Activated T-helper 2 cell treated with anti-CD3 and anti-CD28 coated beads, Interferon-gamma antibody, Interleukin-2, Interleukin-4, amounts not matched to agents 10 μg/mL and 5 μg/mL and 100 μg/mL, durations not matched to agents 14 hours and 24 hours and 36 hours (primary cell): ENCODE measurements at regions of chr3 and their contacts with region 1.

Region 1: DNA sequence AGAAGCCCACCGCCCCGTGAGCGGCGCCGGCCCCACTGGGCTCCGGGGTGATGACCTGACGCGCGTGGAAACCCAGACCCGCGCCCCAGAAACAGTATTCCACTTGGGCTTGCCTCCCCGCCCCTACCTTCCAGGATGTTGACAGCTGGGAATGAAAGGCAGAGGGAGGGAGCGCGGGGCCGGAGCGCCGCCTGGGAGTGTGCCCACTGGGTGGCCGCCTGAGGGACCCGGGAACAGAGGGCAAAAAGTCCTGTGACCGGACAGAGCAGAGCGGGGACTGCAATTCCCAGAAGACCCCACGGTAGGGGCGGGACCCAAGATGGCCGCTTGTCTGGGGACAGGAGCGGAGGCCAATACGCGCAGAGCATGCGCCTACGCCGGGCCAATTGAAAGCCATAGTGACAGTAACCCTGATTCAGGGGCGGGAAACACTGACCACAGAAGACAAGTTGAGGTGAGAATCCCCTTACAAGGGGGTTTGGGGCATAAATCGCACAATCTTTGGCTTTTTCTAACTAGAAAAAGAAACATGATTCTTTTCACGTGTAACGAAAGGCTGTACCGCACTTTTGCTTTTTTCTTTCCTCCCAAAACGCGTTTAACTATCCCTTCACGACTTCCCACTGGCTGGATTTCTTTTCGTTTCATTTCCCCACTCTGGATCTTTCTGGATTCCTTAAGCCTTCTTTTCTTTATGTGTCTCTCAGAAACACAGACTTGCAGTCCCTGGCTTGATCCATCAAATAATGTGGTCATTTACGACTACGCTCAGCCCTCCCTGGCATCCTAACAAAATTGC is at the start of gene FHIT:
- DNase-seq: peak; percentile 89
- H3K4me3 Mint-ChIP-seq: peak within 1 kb of the TSS; percentile 91
- H3K27ac Mint-ChIP-seq: peak within 1 kb of the TSS; percentile 96
- H3K4me1 Mint-ChIP-seq: peaks cover 32% of the 10 kb centered on the region
- H3K27me3 Mint-ChIP-seq: peaks cover 11% of the 10 kb centered on the region
- total RNA-seq, gene FHIT: 20.5 and 29.9 TPM in 2 replicates

Region 2: DNA sequence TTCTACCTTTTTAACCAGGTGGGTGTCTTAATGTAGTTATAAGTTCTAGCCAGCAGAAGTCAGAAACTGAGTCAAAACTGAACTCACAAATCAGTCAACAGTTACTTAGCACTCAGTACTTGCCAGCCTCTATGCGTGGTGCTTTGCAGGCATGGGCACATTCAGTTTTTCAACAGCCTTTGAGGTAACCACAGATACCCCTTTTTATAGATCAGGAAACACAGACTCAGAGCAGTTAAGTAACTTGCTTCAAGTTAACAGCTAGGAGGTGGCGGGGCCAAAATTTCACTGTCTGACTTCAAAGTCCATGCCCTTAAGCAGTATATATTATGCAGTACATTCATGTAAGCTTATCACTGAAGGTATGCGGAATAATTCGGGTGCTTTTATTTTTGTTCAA is 139.5 kb before region 1 on chr3:
- intact Hi-C with region 1: loop called (anchors 5 kb)
- DNase-seq: peak; percentile 8
- H3K4me3 Mint-ChIP-seq: no peak overlapping the region
- H3K27ac Mint-ChIP-seq: no peak overlapping the region
- H3K4me1 Mint-ChIP-seq: peaks cover 19% of the 10 kb centered on the region
- H3K27me3 Mint-ChIP-seq: no peaks in the 10 kb centered on the region

Region 3: GRCh38 chr3:61132062-61132461 is 119.3 kb before region 1 on chr3:
- intact Hi-C with region 1: no loop called
- DNase-seq: no peak
- H3K4me3 Mint-ChIP-seq: no peak overlapping the region
- H3K27ac Mint-ChIP-seq: no peak overlapping the region
- H3K4me1 Mint-ChIP-seq: no peaks in the 10 kb centered on the region
- H3K27me3 Mint-ChIP-seq: no peaks in the 10 kb centered on the region

Region 4: DNA sequence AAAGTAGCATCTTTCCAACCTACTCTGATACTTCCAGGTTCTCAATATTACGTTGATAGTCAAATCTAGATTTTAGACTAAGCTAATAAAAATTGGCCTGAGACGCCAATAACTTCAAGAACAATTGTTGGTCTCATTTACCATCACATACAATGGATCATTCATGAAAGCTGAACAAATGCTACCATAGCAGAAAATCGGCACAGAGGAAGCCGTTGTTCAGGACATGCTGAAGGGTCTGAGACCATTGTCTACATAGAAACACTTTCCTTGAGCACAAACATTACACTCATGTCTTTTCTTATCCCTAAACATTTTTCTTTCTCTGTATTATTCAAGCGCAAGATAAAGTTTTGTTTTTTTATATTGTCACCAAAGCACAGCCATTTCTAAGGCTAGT is 37.1 kb after region 1 on chr3:
- intact Hi-C with region 1: no loop called
- DNase-seq: no peak
- H3K4me3 Mint-ChIP-seq: no peak overlapping the region
- H3K27ac Mint-ChIP-seq: no peak overlapping the region
- H3K4me1 Mint-ChIP-seq: no peaks in the 10 kb centered on the region
- H3K27me3 Mint-ChIP-seq: peaks cover 8% of the 10 kb centered on the region

Region 5: GRCh38 chr3:61497463-61497862 is 246.1 kb after region 1 on chr3:
- intact Hi-C with region 1: no loop called
- DNase-seq: no peak
- H3K4me3 Mint-ChIP-seq: no peak overlapping the region
- H3K27ac Mint-ChIP-seq: no peak overlapping the region
- H3K4me1 Mint-ChIP-seq: no peaks in the 10 kb centered on the region
- H3K27me3 Mint-ChIP-seq: peaks cover 9% of the 10 kb centered on the region

Region 6: DNA sequence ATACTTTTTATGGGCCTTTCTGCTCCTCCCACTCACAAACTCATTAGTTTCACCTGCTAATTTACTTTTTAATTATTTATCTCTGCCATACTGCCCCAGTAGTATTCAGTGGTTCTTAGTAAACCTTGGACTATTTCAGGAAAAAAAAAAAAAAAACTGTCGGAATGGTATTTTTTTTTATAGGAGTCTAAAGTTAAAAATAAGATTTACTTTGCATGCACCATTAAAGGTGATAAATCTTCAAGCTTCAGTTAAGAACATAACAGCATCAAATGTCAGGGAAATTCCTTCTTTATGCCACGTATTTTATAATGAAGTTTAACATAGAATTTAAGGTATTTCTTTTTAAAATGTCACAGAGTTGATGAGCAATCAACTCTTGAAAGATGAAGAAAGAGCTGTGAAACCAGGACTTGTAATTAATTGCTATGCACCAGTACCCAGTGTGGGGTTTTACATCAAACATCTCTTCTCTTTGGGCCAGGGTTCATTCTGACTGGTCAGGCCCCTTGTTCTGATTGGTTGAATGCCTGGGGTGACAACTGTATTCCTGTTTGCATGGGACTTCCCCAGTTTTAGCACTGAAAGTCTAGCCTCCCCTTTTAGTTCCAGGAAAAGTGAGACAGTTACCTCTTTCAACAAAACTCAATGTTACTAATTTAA is 269.7 kb after region 1 on chr3:
- intact Hi-C with region 1: loop called (anchors 2 kb)
- DNase-seq: peak; percentile 37
- H3K4me3 Mint-ChIP-seq: peak overlapping the region; percentile 42
- H3K27ac Mint-ChIP-seq: peak overlapping the region; percentile 87
- H3K4me1 Mint-ChIP-seq: peaks cover 41% of the 10 kb centered on the region
- H3K27me3 Mint-ChIP-seq: no peaks in the 10 kb centered on the region